GM18951 (cell line): ENCODE measurements at regions of chr18 and their contacts with region 1.

Region 1: GRCh38 chr18:63422087-63422809 is at the start of gene VPS4B:
- POLR2A ChIP-seq: peak; percentile 85

Region 2: GRCh38 chr18:63016270-63016669 is 406.0 kb before region 1 on chr18:
- in situ Hi-C with region 1: loop called (anchors 10 kb)
- POLR2A ChIP-seq: no peak

Region 3: GRCh38 chr18:63336352-63337099 is 85.7 kb before region 1 on chr18:
- in situ Hi-C with region 1: no loop called
- POLR2A ChIP-seq: no peak

Region 4: DNA sequence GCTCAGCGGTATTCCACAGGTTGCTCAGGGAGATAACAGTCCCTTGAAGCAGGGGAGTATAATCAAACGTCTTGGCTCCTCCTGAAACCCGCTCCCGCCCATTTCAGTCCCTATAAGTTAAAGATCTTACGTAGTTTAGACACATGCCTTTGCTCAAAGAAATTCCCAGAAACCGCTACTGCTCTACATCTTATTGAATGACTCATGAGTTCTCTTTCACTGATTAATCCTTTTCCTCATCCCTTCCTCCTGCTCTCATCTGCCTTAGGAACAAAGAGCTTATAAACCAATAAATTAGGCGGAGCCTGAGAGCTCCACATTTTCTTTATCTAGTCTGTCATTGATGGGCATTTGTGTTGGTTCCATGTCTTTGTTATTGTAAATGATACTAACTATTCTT is 226.0 kb after region 1 on chr18:
- in situ Hi-C with region 1: no loop called
- POLR2A ChIP-seq: no peak